Dendritic cell treated with granulocyte-macrophage colony-stimulating factor and Interleukin-4, amounts not matched to agents 40 ng/mL and 50 ng/mL, for 4 days (primary cell): ENCODE measurements at regions of chr11 and their contacts with region 1.

Region 1: GRCh38 chr11:104843150-104843836 is 55.0 kb downstream of the CASP12 start:
- H3K4me3 Mint-ChIP-seq: no peak overlapping the region
- H3K27ac Mint-ChIP-seq: no peak overlapping the region
- H3K4me1 Mint-ChIP-seq: peaks cover 9% of the 10 kb centered on the region
- H3K27me3 Mint-ChIP-seq: no peaks in the 10 kb centered on the region

Region 2: DNA sequence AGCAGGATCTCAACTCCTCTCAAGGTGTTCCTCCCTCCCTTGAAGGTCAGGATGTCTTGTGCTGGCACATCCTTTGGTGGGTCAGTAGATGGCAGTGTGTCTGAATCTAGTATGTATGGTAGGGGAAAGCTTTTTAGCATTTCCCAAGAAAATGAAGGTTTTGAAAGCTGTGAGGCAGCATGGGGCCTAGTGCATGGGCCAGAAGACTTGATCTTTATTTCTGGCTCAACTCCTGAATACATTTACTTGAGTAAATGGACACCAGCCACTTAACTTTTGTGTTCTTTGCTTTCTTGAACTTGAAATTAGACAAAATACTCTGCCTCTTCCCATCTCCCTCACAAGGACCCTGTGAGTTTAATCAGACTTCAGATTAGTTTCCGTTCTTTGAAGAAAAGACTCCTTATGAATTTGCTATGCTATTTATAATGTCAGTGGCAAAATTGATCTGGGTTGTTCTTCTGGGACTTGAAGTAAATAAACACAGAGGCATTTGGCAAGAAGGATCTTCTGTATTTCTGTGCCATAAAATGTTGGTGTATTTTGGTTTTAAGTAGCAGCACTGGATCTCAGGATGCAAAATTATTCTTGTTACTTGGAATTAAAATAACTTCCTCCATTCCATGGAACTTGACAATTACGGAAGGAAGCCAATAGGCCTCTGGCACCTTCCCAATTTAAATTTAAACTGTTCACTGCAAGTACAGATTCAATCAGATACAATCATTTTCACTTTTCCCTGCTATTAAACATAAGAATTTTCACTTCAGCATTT is 233.8 kb before region 1 on chr11:
- intact Hi-C with region 1: loop called (anchors 10 kb)
- H3K4me3 Mint-ChIP-seq: no peak overlapping the region
- H3K27ac Mint-ChIP-seq: peak overlapping the region; percentile 83
- H3K4me1 Mint-ChIP-seq: peaks cover 15% of the 10 kb centered on the region
- H3K27me3 Mint-ChIP-seq: no peaks in the 10 kb centered on the region

Region 3: DNA sequence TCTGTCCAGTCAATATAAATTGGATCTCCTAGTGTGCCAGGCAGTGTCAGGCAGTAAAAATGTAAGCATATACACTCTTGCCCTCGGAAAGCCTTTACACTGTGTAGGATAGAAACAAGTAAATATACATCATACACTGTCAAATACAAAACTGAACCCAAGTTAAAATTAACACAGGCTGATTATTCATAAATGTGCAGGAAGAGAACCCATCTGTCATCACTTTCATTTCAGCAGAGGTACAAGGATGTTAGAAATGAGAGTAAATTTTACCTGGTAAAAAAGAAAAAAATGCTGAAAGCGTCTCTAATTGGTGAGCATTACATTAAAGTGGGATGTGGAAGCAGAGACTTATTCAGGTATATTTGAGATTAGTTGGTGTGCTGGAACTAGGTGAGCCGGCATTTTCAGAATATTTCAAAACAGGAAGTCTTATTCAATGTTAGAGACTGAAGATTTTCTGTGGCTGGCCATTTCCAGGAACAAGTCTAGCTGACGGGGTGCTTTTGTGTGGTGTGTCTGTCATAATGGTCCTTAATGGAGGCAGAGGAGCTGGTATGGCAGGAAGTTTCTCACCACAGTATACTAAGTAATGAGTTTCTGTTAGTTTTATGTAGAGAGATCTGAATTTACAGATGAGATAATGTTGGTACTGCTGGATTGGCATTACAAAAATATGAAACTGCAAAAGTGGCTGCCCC is 137.7 kb before region 1 on chr11:
- intact Hi-C with region 1: loop called (anchors 5 kb)
- H3K4me3 Mint-ChIP-seq: peak overlapping the region; percentile 61
- H3K27ac Mint-ChIP-seq: peak overlapping the region; percentile 94
- H3K4me1 Mint-ChIP-seq: peaks cover 34% of the 10 kb centered on the region
- H3K27me3 Mint-ChIP-seq: no peaks in the 10 kb centered on the region

Region 4: GRCh38 chr11:105034813-105035620 is 191.7 kb after region 1 on chr11 and contains the start of gene CASP1:
- intact Hi-C with region 1: loop called (anchors 5 kb)
- H3K4me3 Mint-ChIP-seq: peak within 1 kb of the TSS; percentile 88
- H3K27ac Mint-ChIP-seq: peak within 1 kb of the TSS; percentile 96
- H3K4me1 Mint-ChIP-seq: peaks cover 63% of the 10 kb centered on the region
- H3K27me3 Mint-ChIP-seq: no peaks in the 10 kb centered on the region